ENCODE measurements at regions of chr15 and their contacts with region 1.

Region 1: DNA sequence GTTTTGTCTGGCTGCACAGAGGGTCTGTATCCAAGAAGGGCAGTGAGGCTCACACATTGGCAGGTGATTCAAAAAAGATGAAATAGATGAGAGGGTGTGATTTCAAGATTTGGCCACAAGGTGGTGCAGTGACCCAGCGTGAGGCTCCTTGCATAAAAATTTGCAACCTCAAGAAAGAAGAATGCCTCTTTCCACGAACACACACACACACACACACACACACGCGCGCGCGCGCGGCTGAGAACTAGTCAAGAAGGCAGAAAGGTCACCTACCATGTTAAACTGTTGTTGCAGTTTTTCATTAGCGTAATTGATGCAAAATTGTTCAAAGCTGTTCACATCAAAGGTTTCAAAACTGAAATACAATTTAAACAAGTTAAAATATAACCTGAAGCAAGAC is 39.2 kb downstream of the MYO5C start:
- DNase-seq: no peak
- ATAC-seq: peak; percentile 84
- H3K4me3 ChIP-seq: no peak overlapping the region
- H3K27ac ChIP-seq: no peak overlapping the region
- H3K4me1 ChIP-seq: peaks cover under 1% of the 10 kb centered on the region
- H3K27me3 ChIP-seq: no peaks in the 10 kb centered on the region
- CTCF ChIP-seq: peak; percentile 69

Region 2: GRCh38 chr15:52626671-52627369 is 370.5 kb after region 1 on chr15:
- intact Hi-C with region 1: no loop called
- DNase-seq: no peak
- ATAC-seq: no peak
- H3K4me3 ChIP-seq: no peak overlapping the region
- H3K27ac ChIP-seq: no peak overlapping the region
- H3K4me1 ChIP-seq: no peaks in the 10 kb centered on the region
- H3K27me3 ChIP-seq: no peaks in the 10 kb centered on the region
- CTCF ChIP-seq: no peak

Region 3: DNA sequence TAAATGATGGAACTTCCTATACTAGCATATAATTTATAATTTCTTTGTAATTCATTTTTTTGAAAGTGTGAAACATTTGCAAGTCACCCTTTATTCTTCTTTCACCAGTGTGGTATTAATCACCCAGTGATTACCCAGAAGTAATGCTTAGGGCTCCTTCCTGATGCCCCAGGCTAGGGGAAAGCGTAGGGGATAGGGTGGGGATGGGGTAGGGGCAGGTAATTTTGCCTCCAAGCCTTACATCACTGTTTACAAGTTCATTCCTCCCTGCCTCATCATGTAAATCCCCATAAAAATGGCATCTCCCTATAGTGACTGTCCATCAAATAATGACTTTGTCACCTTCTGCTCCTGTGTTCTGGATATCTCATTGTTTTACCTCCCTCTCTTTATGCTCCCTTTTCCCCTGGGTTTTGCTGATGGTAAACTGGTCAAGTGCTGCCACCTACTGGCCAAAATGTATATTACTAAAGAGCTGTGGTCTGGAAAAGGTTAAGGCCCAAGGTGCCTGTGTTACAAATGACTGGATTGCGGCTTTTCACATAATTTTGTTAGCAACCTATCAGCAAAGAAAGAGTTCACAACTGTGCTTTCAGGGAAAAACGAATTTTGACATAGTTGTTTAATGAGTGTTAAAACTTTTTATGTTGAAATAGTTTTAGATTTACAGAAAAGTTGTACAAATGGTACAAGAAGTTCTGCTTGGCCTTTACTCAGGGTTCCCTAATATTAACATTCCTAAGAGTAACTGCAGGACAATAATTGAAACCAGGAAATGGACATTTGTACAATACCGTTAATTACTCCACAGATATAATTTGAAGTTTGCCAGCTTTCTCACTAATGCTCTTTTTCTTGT is 479.1 kb after region 1 on chr15:
- intact Hi-C with region 1: loop called (anchors 10 kb)
- DNase-seq: no peak
- ATAC-seq: peak; percentile 92
- H3K4me3 ChIP-seq: no peak overlapping the region
- H3K27ac ChIP-seq: no peak overlapping the region
- H3K4me1 ChIP-seq: no peaks in the 10 kb centered on the region
- H3K27me3 ChIP-seq: no peaks in the 10 kb centered on the region
- CTCF ChIP-seq: peak; percentile 85